Dorsolateral prefrontal cortex (tissue), 120 donors: ENCODE measurements at regions of chr5 and their contacts with region 1.

Region 1: GRCh38 chr5:173283318-173284288 is 44.6 kb downstream of the STC2 start:
- DNase-seq: peak in 9 of 10 donors; percentile 18 to 83 (median 48)
- H3K4me3 ChIP-seq: peak overlapping the region; percentile 12 to 65 (median 45)
- H3K27ac ChIP-seq: no peak overlapping the region
- H3K27me3 ChIP-seq: peaks cover 0 to 62% (median 11%) of the 10 kb centered on the region in 45 donors
- CTCF ChIP-seq: peak; percentile 43 to 88 (median 76)

Region 2: DNA sequence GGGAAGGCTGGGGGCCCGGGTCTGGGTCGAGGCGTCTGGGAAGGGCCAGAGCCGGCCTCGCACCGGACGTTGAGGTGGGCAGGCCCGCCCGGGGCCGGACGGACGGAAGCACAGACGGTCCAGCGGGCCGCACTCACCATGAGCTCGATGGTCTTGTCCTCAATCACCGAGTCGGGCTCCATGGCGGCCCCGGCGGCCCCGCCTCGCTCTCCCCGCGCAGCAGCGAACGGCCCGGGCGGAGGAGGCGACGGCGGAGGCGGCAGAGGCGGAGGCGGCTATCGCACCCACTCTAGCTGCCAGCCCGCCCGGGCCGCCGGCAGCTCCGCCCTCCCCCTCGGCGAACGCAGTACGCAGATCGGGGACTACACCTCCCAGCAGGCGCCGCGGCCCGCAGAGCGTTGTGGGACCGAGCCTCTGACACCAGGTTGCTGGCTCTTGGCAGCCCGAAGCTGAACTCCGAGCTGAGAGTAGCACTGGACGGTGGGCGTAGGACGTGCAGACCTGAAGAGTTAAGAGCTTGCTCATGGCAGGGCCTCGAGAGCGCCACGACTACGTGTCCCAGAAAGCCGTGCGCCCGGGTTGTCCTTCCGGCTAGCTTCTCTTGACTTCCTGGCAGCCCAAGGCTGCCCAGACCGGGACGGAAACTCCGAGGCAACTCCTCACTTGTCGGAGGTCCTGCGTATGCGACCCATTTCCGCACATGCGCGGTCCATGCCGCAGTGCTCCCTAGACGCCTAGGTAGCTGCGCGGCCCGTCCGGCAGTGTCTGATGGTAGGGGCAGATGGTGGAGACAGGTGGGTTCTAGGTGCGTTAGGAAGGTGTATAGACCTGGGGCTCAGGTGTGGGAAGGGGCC is 1277.1 kb before region 1 on chr5 and contains the start of gene FBXW11:
- intact Hi-C with region 1: no loop called
- DNase-seq: peak; percentile 95 to 98 (median 98)
- H3K4me3 ChIP-seq: peak within 1 kb of the TSS; percentile 72 to 100 (median 96)
- H3K27ac ChIP-seq: peak within 1 kb of the TSS; percentile 89 to 100 (median 98)
- H3K27me3 ChIP-seq: no peaks in the 10 kb centered on the region
- CTCF ChIP-seq: peak in 21 of 56 donors; percentile 5 to 53 (median 25)
- total RNA-seq, gene FBXW11: 88.4 to 136 (median 113) TPM

Region 3: GRCh38 chr5:172984243-172984953 is 299.2 kb before region 1 on chr5:
- intact Hi-C with region 1: loop called in 1 of 2 experiments (anchors 2 kb)
- DNase-seq: peak in 9 of 10 donors; percentile 10 to 71 (median 57)
- H3K4me3 ChIP-seq: peak overlapping the region; percentile 59 to 100 (median 93)
- H3K27ac ChIP-seq: peak overlapping the region; percentile 67 to 97 (median 91)
- H3K27me3 ChIP-seq: no peaks in the 10 kb centered on the region
- CTCF ChIP-seq: peak in 34 of 56 donors; percentile 11 to 49 (median 25)

Region 4: GRCh38 chr5:173165177-173166016 is 118.2 kb before region 1 on chr5:
- intact Hi-C with region 1: loop called in 1 of 2 experiments (anchors 5 kb)
- DNase-seq: no peak
- H3K4me3 ChIP-seq: no peak overlapping the region
- H3K27ac ChIP-seq: peak overlapping the region in 3 of 59 donors; percentile 2 to 7 (median 6)
- H3K27me3 ChIP-seq: no peaks in the 10 kb centered on the region
- CTCF ChIP-seq: no peak

Region 5: DNA sequence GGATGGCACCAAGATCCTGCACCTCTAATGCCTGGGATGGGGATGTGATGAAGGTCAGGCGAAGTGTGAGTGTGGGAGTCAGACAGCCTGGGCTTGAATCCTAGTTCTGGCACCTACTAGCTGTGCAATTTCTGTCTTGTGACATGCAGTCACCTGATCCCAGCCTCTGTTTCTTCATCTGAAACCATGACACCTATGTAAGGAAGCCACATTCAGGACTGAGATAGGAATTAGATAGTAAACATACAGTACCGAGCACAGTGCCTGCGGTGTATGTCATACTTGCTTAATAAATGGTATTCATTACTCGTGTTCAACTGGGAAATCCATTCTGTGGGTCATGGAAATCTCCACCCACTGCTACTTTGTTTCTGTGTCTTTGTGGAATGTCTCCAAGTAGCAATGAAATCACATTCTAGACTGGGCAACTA is 185.2 kb after region 1 on chr5:
- intact Hi-C with region 1: no loop called
- DNase-seq: no peak
- H3K4me3 ChIP-seq: no peak overlapping the region
- H3K27ac ChIP-seq: peak overlapping the region in 3 of 59 donors; percentile 9 to 16 (median 14)
- H3K27me3 ChIP-seq: no peaks in the 10 kb centered on the region
- CTCF ChIP-seq: no peak